PC-9 (cell line): ENCODE measurements at regions of chr16 and their contacts with region 1.

Region 1: DNA sequence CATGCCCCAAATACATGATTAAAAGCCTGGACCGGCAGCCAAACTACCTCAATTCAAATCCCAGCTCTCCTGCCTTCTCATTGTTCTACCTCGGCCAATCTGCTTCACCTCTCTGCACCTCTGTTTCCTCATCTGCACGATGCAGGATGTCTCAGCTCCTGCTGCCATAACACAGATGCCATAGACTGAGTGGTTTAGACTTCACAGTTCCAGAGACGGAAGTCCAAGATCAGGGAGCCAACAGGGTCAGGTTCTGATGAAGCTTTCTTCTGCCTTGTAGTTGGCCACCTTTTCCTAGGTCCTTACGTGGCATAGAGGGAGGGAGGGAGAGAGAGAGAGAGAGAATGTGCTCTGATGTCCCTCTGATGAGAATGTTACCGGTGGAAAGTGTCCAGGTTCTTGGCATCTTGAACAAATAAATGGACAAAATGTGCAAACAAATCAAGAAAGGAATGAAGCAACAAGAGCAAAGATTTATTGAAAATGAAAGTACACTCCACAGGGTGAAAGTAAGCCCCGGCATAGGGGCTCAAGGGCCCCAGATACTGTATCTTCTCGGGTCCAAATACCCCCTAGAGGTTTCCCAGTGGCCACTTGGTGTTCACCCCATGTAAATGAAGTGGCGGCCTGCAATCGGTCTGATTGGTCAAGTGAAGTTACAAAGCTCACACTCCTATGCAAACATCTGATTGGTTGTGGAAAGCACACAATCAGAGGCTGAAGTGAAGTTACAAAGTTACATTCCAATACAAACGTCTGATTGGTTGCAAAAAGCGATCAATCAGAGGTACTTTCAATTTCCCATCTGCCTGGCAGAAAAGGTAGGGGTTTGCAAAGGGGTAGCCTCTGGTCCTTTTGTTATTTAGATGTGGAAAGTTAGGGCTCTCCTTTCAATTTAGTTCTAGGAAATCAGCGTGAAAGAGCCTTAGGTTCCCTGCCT is 43.3 kb upstream of the ZCCHC14 start:
- DNase-seq: no peak
- H3K4me3 ChIP-seq: peak overlapping the region; percentile 34; the same call in 1 of the 2 replicates
- H3K27ac ChIP-seq: no peak overlapping the region
- H3K4me1 ChIP-seq: no peaks in the 10 kb centered on the region
- H3K27me3 ChIP-seq: peaks cover 100% of the 10 kb centered on the region
- CTCF ChIP-seq: no peak

Region 2: DNA sequence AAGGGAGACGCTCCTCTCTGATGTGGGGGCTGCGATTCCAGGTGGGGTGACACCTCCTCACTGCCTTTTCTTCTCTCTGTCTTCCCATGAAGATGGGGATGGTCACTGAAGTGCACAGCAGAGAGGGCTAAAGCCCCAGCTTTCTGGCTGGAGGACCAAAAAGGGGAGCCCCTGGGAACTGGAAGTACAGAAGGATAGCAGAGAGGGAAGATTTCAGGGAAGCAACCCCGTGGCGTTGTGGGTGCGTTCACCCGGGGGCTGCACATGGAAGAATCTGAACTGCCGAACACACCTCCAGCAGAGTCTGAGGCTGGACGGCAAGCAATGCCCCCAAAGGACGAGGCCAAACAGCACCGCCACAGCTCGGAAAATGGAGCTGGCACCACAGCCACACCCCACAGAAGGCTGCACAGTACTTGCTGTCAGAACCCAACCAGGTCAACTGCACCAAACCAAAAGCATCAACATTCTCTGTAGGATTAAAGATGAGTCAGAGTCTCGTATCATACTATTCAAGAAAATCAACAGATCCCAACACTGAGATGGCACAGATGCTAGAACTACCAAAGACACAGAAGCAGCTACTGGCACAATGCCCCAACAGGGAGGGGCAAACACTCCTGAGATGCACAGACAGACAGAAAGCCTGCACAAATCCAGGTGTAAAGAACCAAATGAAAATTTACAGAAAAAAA is 94.1 kb before region 1 on chr16:
- CTCF ChIA-PET with region 1: no interaction called
- POLR2A ChIA-PET with region 1: no interaction called
- intact Hi-C with region 1: no loop called
- DNase-seq: no peak
- H3K4me3 ChIP-seq: no peak overlapping the region
- H3K27ac ChIP-seq: no peak overlapping the region
- H3K4me1 ChIP-seq: no peaks in the 10 kb centered on the region
- H3K27me3 ChIP-seq: no peaks in the 10 kb centered on the region
- CTCF ChIP-seq: no peak

Region 3: DNA sequence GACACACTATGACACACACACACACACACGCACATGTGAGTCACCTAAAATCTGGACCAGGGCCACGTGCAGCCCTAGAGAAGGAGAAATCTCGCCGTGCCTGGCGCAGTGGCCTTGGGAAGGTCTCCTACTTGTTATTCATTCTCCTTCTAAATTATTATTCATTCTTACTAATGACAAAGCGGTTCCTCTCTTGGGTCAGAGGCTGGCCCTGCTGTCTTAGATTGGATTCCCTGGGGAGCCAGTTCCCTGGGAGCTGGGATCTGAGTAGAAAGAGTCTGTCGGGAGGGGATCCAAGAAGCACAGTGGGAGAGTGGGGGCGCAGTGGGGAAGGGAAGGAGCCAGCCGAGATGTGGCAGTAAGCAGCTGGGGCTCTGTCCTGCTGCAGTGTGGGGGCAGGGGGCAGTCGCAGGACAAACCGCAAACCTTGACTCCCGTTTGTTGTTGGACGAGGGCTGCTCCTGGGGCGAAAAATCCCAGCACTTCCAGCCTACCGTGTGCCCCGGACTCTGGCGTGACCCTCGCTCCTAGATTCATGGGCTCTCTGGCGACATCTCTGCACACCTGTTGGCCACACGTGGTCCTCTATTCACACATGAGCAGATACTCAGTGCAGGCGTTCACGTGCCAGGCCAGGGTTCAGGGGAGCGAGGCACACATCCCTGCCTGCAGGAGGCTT is 47.5 kb after region 1 on chr16:
- CTCF ChIA-PET with region 1: no interaction called
- POLR2A ChIA-PET with region 1: no interaction called
- intact Hi-C with region 1: loop called (anchors 2 kb)
- DNase-seq: no peak
- H3K4me3 ChIP-seq: no peak overlapping the region
- H3K27ac ChIP-seq: no peak overlapping the region
- H3K4me1 ChIP-seq: peaks cover 17% of the 10 kb centered on the region
- H3K27me3 ChIP-seq: peaks cover 25% of the 10 kb centered on the region
- CTCF ChIP-seq: no peak